ENCODE measurements at regions of chr2 and their contacts with region 1.

Region 1: DNA sequence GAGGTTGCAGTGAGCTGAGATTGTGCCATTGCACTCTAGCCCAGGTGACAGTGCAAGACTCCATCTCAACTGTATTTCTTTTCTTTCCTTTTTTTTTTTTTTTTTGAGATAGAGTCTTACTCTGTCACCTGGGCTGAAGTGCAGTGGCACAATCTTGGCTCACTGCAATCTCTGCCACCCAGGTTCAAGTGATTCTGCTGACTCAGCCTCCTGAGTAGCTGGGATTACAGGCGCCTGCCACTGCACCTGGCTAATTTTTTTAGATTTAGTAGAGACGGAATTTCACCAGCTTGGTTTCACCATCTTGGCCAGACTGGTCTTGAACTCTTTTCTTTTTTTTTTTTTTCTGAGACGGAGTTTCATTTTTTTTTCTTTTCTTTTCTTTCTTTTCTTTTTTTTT is 41.3 kb upstream of the SATB2 start:
- DNase-seq: no peak
- ATAC-seq: no peak
- H3K4me3 ChIP-seq: no peak overlapping the region
- H3K27ac ChIP-seq: no peak overlapping the region
- H3K4me1 ChIP-seq: no peaks in the 10 kb centered on the region
- H3K27me3 ChIP-seq: no peaks in the 10 kb centered on the region
- CTCF ChIP-seq: no peak
- POLR2A ChIP-seq: no peak
- RAD21 ChIP-seq: no peak

Region 2: GRCh38 chr2:199329466-199329865 is 169.5 kb before region 1 on chr2:
- CTCF ChIA-PET with region 1: no interaction called
- POLR2A ChIA-PET with region 1: interaction called, 10 read pairs
- dilution Hi-C with region 1: no loop called
- in situ Hi-C with region 1: no loop called
- intact Hi-C with region 1: no loop called
- DNase-seq: peak; percentile 71
- ATAC-seq: peak; percentile 60
- H3K4me3 ChIP-seq: no peak overlapping the region
- H3K27ac ChIP-seq: no peak overlapping the region
- H3K4me1 ChIP-seq: no peaks in the 10 kb centered on the region
- H3K27me3 ChIP-seq: no peaks in the 10 kb centered on the region
- CTCF ChIP-seq: no peak
- POLR2A ChIP-seq: no peak
- RAD21 ChIP-seq: no peak

Region 3: GRCh38 chr2:199772035-199772976 is 273.3 kb after region 1 on chr2:
- CTCF ChIA-PET with region 1: no interaction called
- POLR2A ChIA-PET with region 1: no interaction called
- dilution Hi-C with region 1: no loop called
- in situ Hi-C with region 1: no loop called
- intact Hi-C with region 1: no loop called
- DNase-seq: no peak
- ATAC-seq: no peak
- H3K4me3 ChIP-seq: no peak overlapping the region
- H3K27ac ChIP-seq: no peak overlapping the region
- H3K4me1 ChIP-seq: no peaks in the 10 kb centered on the region
- H3K27me3 ChIP-seq: peaks cover 2% of the 10 kb centered on the region; the same call in 1 of the 2 replicates
- CTCF ChIP-seq: no peak
- POLR2A ChIP-seq: no peak
- RAD21 ChIP-seq: no peak

Measured in IMR-90 (cell line).